WTC11 (cell line): ENCODE measurements at regions of chr3 and their contacts with region 1.

Region 1: GRCh38 chr3:111859974-111860859 is 1.2 kb downstream of the PHLDB2 start:
- DNase-seq: peak; percentile 84
- ATAC-seq: peak; percentile 68
- H3K4me3 Mint-ChIP-seq: peak overlapping the region; percentile 96
- H3K27ac Mint-ChIP-seq: peak overlapping the region; percentile 95
- H3K4me1 Mint-ChIP-seq: peaks cover 58% of the 10 kb centered on the region
- H3K27me3 Mint-ChIP-seq: peaks cover 23% of the 10 kb centered on the region
- CTCF ChIP-seq: no peak

Region 2: GRCh38 chr3:111717601-111718000 is 142.6 kb before region 1 on chr3:
- CTCF ChIA-PET with region 1: interaction called, 33 read pairs
- POLR2A ChIA-PET with region 1: no interaction called
- DNase-seq: peak; percentile 71
- ATAC-seq: peak; percentile 96
- H3K4me3 Mint-ChIP-seq: no peak overlapping the region
- H3K27ac Mint-ChIP-seq: no peak overlapping the region
- H3K4me1 Mint-ChIP-seq: peaks cover 8% of the 10 kb centered on the region
- H3K27me3 Mint-ChIP-seq: no peaks in the 10 kb centered on the region
- CTCF ChIP-seq: peak; percentile 93

Region 3: DNA sequence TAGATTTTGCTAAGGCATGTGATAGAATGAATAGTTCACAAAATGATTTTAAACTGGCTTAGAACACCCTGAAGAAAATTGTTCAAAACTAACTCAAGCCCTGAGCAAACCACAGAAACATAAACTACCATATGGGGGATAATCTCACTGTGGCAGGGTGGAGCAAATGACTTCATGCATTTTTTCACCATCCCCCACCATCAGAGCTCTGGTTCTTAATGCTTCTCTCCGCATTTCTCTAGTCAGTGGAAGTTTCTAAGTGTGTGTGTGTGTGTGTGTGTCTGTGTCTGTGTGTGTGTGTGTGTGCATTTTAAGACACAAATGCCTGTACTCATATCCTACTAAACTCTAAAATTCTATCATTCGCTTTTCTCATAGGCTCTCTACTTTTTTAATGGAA is 108.3 kb before region 1 on chr3:
- CTCF ChIA-PET with region 1: interaction called, 11 read pairs
- POLR2A ChIA-PET with region 1: no interaction called
- DNase-seq: no peak
- ATAC-seq: peak; percentile 46; the same call in 1 of the 2 replicates
- H3K4me3 Mint-ChIP-seq: no peak overlapping the region
- H3K27ac Mint-ChIP-seq: no peak overlapping the region
- H3K4me1 Mint-ChIP-seq: peaks cover 41% of the 10 kb centered on the region
- H3K27me3 Mint-ChIP-seq: no peaks in the 10 kb centered on the region
- CTCF ChIP-seq: no peak

Region 4: DNA sequence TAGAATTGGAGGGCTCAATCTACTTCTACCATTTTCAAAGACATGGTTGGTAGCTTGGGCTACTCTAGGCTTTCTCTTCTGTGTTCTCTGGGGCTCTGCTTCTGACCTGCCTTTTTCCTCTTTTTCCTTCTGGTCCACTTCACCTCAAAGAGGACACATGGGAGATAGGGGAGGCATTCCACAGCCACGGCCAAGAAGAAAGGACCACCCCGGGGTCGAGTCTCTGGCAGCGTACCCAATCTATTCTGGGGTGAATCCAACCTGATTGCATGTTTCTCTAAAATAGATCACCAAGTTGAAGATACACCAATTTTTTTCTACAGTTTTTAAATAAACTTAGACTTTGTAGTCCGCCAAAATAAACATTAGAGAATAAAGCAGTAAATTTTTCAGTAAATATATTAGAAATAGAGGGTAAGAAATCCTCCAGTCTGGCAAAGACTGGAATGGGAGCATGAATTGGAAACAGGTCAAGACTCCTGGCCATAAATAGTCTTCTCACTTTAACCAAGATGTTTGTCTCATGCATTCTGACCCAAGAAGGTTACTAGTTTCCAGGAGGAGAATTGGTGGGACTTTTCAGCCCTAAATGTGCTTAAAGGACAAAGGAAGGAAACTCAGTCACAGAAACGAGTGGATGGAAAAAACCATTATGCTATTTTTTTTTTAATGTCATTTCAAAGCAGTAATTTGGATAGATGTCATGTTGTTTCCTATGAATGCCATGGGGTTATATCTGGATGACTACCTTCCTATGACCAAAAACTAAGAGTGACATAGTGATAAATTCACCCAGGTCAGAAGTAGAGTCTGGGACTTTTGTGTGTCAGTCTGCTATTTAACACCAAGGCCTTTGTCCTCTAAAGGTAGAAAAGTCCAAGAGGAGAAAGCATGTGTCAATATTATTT is 72.4 kb before region 1 on chr3:
- CTCF ChIA-PET with region 1: no interaction called
- POLR2A ChIA-PET with region 1: no interaction called
- DNase-seq: no peak
- ATAC-seq: no peak
- H3K4me3 Mint-ChIP-seq: no peak overlapping the region
- H3K27ac Mint-ChIP-seq: no peak overlapping the region
- H3K4me1 Mint-ChIP-seq: peaks cover 3% of the 10 kb centered on the region
- H3K27me3 Mint-ChIP-seq: no peaks in the 10 kb centered on the region
- CTCF ChIP-seq: no peak